Mammary epithelial cell (primary cell): ENCODE measurements at regions of chr12 and their contacts with region 1.

Region 1: DNA sequence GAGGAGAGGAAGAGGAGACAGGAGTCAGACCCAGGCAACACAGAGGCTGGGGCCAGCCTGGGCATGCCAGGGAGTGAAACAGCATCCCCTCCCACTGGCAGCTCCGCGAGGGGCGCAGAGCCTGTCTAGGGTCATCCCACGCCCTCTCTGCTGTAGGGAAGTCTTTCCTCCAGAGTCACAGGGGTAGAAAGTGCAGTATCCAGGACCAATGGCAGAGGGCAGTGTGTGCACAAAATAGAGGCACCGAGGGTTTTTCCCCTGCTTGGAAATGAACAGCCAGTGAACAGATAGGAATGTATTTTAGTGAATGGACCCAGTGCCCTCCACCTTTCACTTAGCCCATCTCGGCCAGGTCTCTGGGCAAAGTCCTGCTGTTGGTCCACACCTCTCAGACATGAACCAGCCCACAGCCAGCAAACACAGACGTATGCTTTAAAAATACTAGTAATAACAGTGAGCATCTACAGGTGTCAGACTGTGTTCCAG is 9.4 kb upstream of the KRT74 start:
- DNase-seq: peak; percentile 87
- H3K4me3 ChIP-seq: no peak overlapping the region
- H3K27ac ChIP-seq: peak overlapping the region; percentile 68
- H3K4me1 ChIP-seq: peaks cover 53% of the 10 kb centered on the region
- H3K27me3 ChIP-seq: no peaks in the 10 kb centered on the region
- CTCF ChIP-seq: peak; percentile 75 to 88

Region 2: DNA sequence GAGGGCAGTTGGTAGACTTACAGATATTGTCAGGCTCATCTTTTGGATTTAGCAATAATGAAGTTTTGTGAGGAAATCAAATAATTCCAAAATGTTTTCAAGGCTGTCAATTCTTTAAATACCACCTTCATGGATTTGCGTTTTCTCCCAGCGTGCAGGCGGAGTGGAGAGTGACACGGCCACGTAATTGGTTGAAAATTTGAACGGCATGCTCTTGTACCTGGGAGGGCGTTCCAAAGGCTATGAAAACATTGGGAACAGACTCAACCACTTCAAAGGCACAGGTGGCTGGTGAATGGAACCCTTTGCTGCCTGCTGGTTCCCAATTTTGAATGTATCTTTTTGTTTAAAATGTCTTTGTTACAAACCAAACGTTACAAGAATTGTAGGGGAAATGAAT is 491.1 kb before region 1 on chr12:
- CTCF ChIA-PET with region 1: no interaction called
- dilution Hi-C with region 1: no loop called
- in situ Hi-C with region 1: no loop called
- intact Hi-C with region 1: no loop called
- DNase-seq: no peak
- H3K4me3 ChIP-seq: no peak overlapping the region
- H3K27ac ChIP-seq: no peak overlapping the region
- H3K4me1 ChIP-seq: no peaks in the 10 kb centered on the region
- H3K27me3 ChIP-seq: peaks cover 4% of the 10 kb centered on the region
- CTCF ChIP-seq: no peak

Region 3: DNA sequence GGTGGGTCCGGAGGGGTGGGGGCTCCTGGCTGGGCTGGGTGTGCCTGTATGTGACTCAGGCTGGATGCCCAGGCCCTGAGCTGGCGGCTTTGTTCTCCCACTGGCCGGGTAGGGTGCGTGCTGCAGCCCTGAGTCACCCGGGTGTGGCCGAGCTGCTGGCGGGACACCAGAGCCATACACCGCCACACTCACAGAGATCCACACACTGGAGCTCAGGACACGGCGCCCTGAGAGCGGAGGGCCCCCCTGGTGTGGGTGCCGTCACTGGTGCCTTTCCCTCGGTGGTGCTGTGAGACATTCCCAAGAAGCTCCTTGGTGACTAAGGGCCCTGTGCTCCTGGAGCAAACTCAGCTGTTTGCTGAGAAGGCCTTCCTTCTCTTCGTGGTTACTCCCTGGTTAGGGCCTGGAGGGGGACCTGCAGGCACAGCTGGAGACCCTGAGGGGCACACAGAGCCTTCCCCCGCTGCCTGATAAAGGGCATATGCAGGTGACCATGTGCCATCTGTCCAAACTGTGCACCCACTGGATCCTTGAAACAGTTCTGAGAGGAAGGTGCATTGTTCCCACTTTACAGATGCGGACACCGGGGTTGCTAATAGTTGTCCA is 435.5 kb before region 1 on chr12:
- CTCF ChIA-PET with region 1: no interaction called
- dilution Hi-C with region 1: no loop called
- in situ Hi-C with region 1: loop called (anchors 5 kb)
- intact Hi-C with region 1: loop called (anchors 1 kb)
- DNase-seq: peak; percentile 99
- H3K4me3 ChIP-seq: no peak overlapping the region
- H3K27ac ChIP-seq: peak overlapping the region; percentile 100
- H3K4me1 ChIP-seq: peaks cover 89% of the 10 kb centered on the region
- H3K27me3 ChIP-seq: no peaks in the 10 kb centered on the region
- CTCF ChIP-seq: no peak

Region 4: DNA sequence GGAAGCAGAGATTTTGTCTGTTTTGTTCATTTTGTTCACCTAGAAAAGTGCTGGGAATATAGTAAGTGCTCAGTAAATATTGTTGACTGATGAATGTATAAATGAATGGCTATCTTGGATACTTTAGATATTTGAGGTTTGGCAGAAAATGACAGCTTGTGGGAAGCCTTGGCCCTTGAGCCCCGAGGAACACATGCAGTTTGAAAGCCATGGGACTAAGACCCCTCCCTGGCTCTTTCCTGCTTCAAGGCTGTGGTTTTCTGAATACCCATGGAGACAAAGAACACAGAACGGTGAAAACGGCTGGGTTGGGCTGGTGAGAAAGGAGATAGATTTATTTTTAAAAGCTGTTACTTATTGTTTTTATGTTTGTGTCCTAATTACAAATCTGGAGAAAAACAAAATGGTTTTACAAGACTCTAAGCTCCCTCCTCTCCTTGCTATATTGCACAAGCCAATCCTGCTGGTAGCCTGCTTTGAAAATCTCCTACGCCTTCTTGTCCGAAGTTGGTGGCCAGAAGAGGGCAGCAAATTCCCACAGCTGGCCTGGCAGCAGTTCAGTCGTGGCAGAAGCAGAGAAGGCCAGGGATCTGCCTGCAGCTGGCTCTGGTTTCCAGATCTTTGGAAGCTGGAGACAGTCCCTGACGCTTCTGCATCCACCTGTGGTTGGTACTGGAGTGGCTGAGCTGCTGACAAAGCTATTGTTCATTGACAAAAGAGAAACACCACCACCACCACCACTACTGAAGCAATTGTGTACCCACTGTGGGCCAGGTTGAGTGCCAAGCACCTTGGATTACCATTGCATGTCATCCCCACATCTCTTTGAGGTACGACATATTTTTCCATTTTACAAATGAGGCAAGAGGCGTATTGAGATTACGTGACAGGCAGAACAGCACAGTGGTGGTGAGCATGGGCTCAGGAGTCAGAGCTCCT is 210.5 kb before region 1 on chr12:
- CTCF ChIA-PET with region 1: interaction called, 3 read pairs
- dilution Hi-C with region 1: no loop called
- in situ Hi-C with region 1: no loop called
- intact Hi-C with region 1: loop called (anchors 1 kb)
- DNase-seq: peak; percentile 81
- H3K4me3 ChIP-seq: no peak overlapping the region
- H3K27ac ChIP-seq: no peak overlapping the region
- H3K4me1 ChIP-seq: peaks cover 3% of the 10 kb centered on the region
- H3K27me3 ChIP-seq: no peaks in the 10 kb centered on the region
- CTCF ChIP-seq: peak; percentile 86 to 93

Region 5: GRCh38 chr12:52390739-52391617 is 192.0 kb before region 1 on chr12:
- CTCF ChIA-PET with region 1: no interaction called
- dilution Hi-C with region 1: no loop called
- in situ Hi-C with region 1: loop called in 1 of 2 experiments (anchors 10 kb)
- intact Hi-C with region 1: loop called (anchors 1 kb)
- DNase-seq: no peak
- H3K4me3 ChIP-seq: no peak overlapping the region
- H3K27ac ChIP-seq: peak overlapping the region; percentile 19
- H3K4me1 ChIP-seq: peaks cover 59% of the 10 kb centered on the region
- H3K27me3 ChIP-seq: no peaks in the 10 kb centered on the region
- CTCF ChIP-seq: peak; percentile 89 to 90

Region 6: DNA sequence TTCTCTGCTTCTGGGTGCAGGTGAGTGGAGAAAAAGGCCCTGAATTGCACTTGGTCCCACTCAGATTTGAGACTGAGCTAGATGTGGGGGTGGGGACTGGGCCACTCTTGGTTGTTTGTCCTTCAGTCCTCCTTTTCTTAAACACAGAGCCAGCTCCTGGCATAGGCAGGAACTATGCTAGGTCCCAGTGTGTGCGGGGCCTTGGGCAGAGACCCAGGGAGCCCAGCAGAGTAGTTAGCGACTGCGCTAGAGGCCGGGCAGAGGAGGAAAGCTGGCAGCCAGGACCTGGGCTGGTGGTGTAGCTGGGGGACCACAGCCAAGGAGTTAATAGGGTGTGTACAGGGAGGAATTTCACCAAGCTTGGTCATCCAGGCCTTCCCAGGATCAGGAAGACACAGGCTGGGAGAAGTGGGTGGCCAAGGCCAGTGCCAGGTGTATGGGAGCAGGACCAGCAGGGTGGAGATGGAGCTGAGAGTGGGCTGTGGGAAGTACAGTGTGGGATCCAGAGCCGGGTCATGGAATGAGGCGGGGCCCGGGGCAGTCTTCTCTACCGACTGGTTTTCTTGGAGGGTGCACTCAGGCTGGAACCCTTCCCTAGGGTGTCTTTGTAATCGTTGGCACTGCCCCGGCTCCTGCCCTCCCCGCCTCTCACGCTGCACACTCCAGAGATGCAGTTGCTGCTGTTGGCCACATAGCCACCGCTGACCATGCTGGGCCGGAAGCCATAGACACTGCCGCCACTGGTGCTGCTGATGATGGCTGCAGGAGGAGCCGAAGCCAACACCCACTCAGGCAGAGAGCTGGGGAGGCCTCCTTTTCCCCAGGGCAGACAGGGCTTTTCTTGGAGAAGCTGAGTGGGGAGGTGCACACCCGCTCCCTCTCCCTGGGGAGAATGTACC is 38.8 kb before region 1 on chr12:
- CTCF ChIA-PET with region 1: no interaction called
- dilution Hi-C with region 1: no loop called
- in situ Hi-C with region 1: no loop called
- intact Hi-C with region 1: loop called (anchors 1 kb)
- DNase-seq: no peak
- H3K4me3 ChIP-seq: no peak overlapping the region
- H3K27ac ChIP-seq: no peak overlapping the region
- H3K4me1 ChIP-seq: peaks cover 14% of the 10 kb centered on the region
- H3K27me3 ChIP-seq: no peaks in the 10 kb centered on the region
- CTCF ChIP-seq: peak; percentile 20 to 26

Region 7: GRCh38 chr12:52561880-52562449 is 21.0 kb before region 1 on chr12:
- CTCF ChIA-PET with region 1: no interaction called
- dilution Hi-C with region 1: no loop called
- in situ Hi-C with region 1: no loop called
- intact Hi-C with region 1: no loop called
- DNase-seq: no peak
- H3K4me3 ChIP-seq: no peak overlapping the region
- H3K27ac ChIP-seq: no peak overlapping the region
- H3K4me1 ChIP-seq: no peaks in the 10 kb centered on the region
- H3K27me3 ChIP-seq: no peaks in the 10 kb centered on the region
- CTCF ChIP-seq: peak; percentile 30 to 33

Region 8: GRCh38 chr12:52715416-52715815 is 132.4 kb after region 1 on chr12:
- CTCF ChIA-PET with region 1: no interaction called
- dilution Hi-C with region 1: no loop called
- in situ Hi-C with region 1: no loop called
- intact Hi-C with region 1: no loop called
- DNase-seq: peak; percentile 4
- H3K4me3 ChIP-seq: no peak overlapping the region
- H3K27ac ChIP-seq: no peak overlapping the region
- H3K4me1 ChIP-seq: no peaks in the 10 kb centered on the region
- H3K27me3 ChIP-seq: peaks cover 21% of the 10 kb centered on the region
- CTCF ChIP-seq: no peak

Region 9: GRCh38 chr12:52870351-52871290 is 287.6 kb after region 1 on chr12:
- CTCF ChIA-PET with region 1: no interaction called
- dilution Hi-C with region 1: no loop called
- in situ Hi-C with region 1: loop called (anchors 5 kb)
- intact Hi-C with region 1: loop called (anchors 1 kb)
- DNase-seq: peak; percentile 52
- H3K4me3 ChIP-seq: no peak overlapping the region
- H3K27ac ChIP-seq: peak overlapping the region; percentile 67
- H3K4me1 ChIP-seq: peaks cover 59% of the 10 kb centered on the region
- H3K27me3 ChIP-seq: no peaks in the 10 kb centered on the region
- CTCF ChIP-seq: peak; percentile 57 to 74

Region 10: DNA sequence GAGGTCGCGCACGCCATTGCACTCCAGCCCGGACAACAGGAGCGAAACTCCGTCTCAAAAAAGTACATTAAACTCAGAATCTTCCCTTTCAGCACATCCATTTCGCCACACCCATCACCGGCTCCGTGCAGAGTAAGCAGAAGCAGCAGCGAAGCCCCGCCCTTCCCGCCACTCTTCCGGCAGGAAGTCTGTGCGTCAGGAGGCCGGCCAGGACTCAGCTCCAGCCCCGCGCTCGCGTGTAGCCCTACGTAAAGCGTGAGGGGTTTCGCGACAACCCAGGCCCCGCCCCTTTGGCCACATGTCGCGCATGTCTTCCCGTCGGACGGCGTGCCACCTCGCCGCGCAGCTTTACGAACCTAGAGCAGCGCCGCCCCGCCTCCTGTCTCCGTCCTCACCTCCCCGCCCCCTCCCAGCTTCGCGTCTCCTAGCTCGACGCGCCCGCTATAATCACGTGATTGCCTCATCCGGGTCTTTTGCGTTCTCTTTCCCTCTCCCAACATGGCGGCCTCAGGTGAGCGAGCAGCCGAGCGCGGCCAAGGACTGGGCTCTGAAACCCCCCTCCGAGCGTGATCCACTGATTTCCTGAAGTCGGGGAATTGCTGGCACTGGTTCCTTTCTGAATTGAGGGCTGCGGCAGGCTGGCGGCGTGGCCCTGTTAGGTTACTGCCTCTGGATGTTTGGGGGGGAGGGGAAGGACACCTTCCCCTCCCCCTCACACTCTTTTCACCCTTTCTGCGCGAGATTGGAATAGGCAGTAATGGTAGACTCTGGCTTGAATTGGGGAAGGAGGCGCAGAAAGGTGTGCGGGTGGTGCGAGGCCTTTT is 423.2 kb after region 1 on chr12 and contains the start of gene EIF4B:
- CTCF ChIA-PET with region 1: no interaction called
- dilution Hi-C with region 1: no loop called
- in situ Hi-C with region 1: no loop called
- intact Hi-C with region 1: no loop called
- DNase-seq: peak; percentile 99
- H3K4me3 ChIP-seq: peak within 1 kb of the TSS; percentile 75 to 86 (median 86)
- H3K27ac ChIP-seq: peak within 1 kb of the TSS; percentile 90
- H3K4me1 ChIP-seq: peaks cover 21% of the 10 kb centered on the region
- H3K27me3 ChIP-seq: no peaks in the 10 kb centered on the region
- CTCF ChIP-seq: no peak
- total RNA-seq, gene EIF4B: 350 to 850 TPM